Caco-2 (cell line): ENCODE measurements at regions of chr20 and their contacts with region 1.

Region 1: GRCh38 chr20:34473262-34473883 is 42.8 kb upstream of the DYNLRB1 start:
- DNase-seq: peak; percentile 88 to 93
- H3K4me3 ChIP-seq: no peak overlapping the region
- H3K4me3 Mint-ChIP-seq: no peak overlapping the region
- H3K27ac Mint-ChIP-seq: no peak overlapping the region
- H3K4me1 ChIP-seq: peaks cover 8% of the 10 kb centered on the region; the same call in 1 of the 2 replicates
- H3K4me1 Mint-ChIP-seq: no peaks in the 10 kb centered on the region
- H3K27me3 ChIP-seq: no peaks in the 10 kb centered on the region
- H3K27me3 Mint-ChIP-seq: no peaks in the 10 kb centered on the region
- CTCF ChIP-seq: peak; percentile 88 to 91

Region 2: DNA sequence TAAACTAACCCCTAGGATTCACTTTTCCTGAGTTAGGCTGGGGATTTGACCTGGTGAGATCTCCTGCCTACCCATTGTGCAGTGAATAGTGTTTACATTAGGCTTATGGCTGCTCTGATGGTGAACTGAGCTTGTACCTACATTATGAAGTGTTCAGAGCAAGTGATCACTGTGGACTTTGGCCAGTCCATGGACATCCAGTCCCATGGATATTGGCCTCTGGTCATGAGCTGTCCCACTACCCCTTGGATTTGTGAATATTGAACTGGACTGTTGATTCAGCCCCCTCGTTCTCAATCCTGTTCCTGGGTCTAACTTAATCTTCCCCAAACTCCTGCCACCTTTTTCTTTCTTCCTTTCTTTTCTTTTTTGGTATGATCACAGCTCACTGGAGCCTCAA is 218.4 kb before region 1 on chr20:
- CTCF ChIA-PET with region 1: no interaction called
- POLR2A ChIA-PET with region 1: no interaction called
- intact Hi-C with region 1: loop called (anchors 1 kb)
- DNase-seq: peak in 1 of 2 experiments; percentile 34
- H3K4me3 ChIP-seq: no peak overlapping the region
- H3K4me3 Mint-ChIP-seq: no peak overlapping the region
- H3K27ac Mint-ChIP-seq: no peak overlapping the region
- H3K4me1 ChIP-seq: peaks cover 19% of the 10 kb centered on the region
- H3K4me1 Mint-ChIP-seq: peaks cover 27% of the 10 kb centered on the region
- H3K27me3 ChIP-seq: no peaks in the 10 kb centered on the region
- H3K27me3 Mint-ChIP-seq: no peaks in the 10 kb centered on the region
- CTCF ChIP-seq: no peak

Region 3: GRCh38 chr20:34445177-34446065 is 28.0 kb before region 1 on chr20:
- CTCF ChIA-PET with region 1: interaction called, 3 read pairs
- POLR2A ChIA-PET with region 1: interaction called, 11 read pairs
- intact Hi-C with region 1: no loop called
- DNase-seq: no peak
- H3K4me3 ChIP-seq: no peak overlapping the region
- H3K4me3 Mint-ChIP-seq: no peak overlapping the region
- H3K27ac Mint-ChIP-seq: no peak overlapping the region
- H3K4me1 ChIP-seq: 0 out of 2 replicates have a peak, but pooled peaks cover 8% of the 10 kb centered on the region
- H3K4me1 Mint-ChIP-seq: peaks cover 20% of the 10 kb centered on the region
- H3K27me3 ChIP-seq: no peaks in the 10 kb centered on the region
- H3K27me3 Mint-ChIP-seq: no peaks in the 10 kb centered on the region
- CTCF ChIP-seq: no peak